B cell (primary cell): ENCODE measurements at regions of chr12 and their contacts with region 1.

Region 1: GRCh38 chr12:810671-811415 is 58.5 kb downstream of the WNK1 start:
- DNase-seq: no peak
- ATAC-seq: no peak
- H3K4me3 ChIP-seq: no peak overlapping the region
- H3K4me3 Mint-ChIP-seq: no peak overlapping the region
- H3K27ac ChIP-seq: peak overlapping the region in 1 of 2 donors; percentile 53
- H3K27ac Mint-ChIP-seq: peak overlapping the region; percentile 23
- H3K4me1 ChIP-seq: peaks cover 10 to 18% of the 10 kb centered on the region in 2 donors
- H3K4me1 Mint-ChIP-seq: peaks cover 42% of the 10 kb centered on the region
- H3K27me3 ChIP-seq: no peaks in the 10 kb centered on the region
- H3K27me3 Mint-ChIP-seq: no peaks in the 10 kb centered on the region
- CTCF ChIP-seq: no peak

Region 2: GRCh38 chr12:575948-576612 is 234.8 kb before region 1 on chr12:
- CTCF ChIA-PET with region 1: interaction called, 151 read pairs
- POLR2A ChIA-PET with region 1: no interaction called
- intact Hi-C with region 1: loop called (anchors 1 kb)
- DNase-seq: peak; percentile 88
- ATAC-seq: peak; percentile 99
- H3K4me3 ChIP-seq: peak overlapping the region in 4 of 5 experiments; percentile 20 to 34 (median 26)
- H3K4me3 Mint-ChIP-seq: peak overlapping the region; percentile 79
- H3K27ac ChIP-seq: no peak overlapping the region
- H3K27ac Mint-ChIP-seq: peak overlapping the region; percentile 65
- H3K4me1 ChIP-seq: peaks cover 8 to 12% of the 10 kb centered on the region in 2 donors
- H3K4me1 Mint-ChIP-seq: peaks cover 8% of the 10 kb centered on the region
- H3K27me3 ChIP-seq: no peaks in the 10 kb centered on the region
- H3K27me3 Mint-ChIP-seq: no peaks in the 10 kb centered on the region
- CTCF ChIP-seq: peak; percentile 97

Region 3: DNA sequence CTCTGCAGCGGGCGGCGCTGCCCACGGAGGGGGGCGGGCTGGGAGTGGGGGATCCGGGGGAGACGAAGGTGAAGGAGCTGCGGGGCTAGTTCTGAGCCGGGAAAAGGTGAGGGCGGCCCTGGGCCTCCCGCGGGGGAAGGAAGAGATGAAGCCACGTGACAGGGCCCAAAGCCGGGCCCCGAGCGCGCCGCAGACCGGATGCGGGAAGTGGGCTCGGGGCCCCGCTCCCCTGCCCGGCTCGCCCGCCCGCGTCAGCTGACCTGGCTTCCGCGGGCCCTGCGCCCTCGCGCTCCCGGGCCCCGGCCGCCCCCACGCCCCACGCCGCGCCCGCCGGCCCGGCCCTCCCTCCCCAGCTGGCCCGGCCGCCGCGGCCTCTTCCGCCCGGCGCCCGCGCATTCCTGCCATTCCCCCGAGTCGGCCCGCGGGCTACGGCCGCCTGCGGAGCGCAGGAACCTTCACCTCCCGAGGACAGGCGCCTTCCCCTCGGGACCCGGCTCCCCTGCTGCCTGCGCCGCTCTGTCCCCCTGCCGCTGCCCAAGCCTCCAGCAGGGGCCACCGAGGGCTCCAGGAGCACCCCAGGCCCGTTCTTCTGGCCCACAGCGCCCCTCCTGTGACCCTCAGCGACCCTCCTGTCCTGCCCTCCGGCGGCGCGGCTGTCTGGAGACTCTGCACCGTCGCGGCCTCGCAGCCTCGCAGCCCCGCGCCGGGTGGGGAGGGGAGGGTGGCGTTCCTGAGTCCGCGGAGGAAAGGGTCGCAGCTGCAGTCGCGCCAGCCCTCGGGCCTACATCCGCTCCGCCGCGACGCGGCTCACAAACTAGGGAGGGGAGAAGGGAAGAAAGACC is 168.0 kb before region 1 on chr12:
- CTCF ChIA-PET with region 1: interaction called, 4 read pairs
- POLR2A ChIA-PET with region 1: no interaction called
- intact Hi-C with region 1: loop called (anchors 5 kb)
- DNase-seq: peak; percentile 86
- ATAC-seq: peak; percentile 75
- H3K4me3 ChIP-seq: peak overlapping the region; percentile 56 to 80 (median 78)
- H3K4me3 Mint-ChIP-seq: peak overlapping the region; percentile 89
- H3K27ac ChIP-seq: peak overlapping the region; percentile 94 to 96
- H3K27ac Mint-ChIP-seq: peak overlapping the region; percentile 99
- H3K4me1 ChIP-seq: peaks cover 28 to 43% of the 10 kb centered on the region in 2 donors
- H3K4me1 Mint-ChIP-seq: peaks cover 51% of the 10 kb centered on the region
- H3K27me3 ChIP-seq: no peaks in the 10 kb centered on the region
- H3K27me3 Mint-ChIP-seq: no peaks in the 10 kb centered on the region
- CTCF ChIP-seq: peak; percentile 43

Region 4: GRCh38 chr12:712172-712863 is 98.5 kb before region 1 on chr12:
- CTCF ChIA-PET with region 1: no interaction called
- POLR2A ChIA-PET with region 1: no interaction called
- intact Hi-C with region 1: no loop called
- DNase-seq: no peak
- ATAC-seq: no peak
- H3K4me3 ChIP-seq: no peak overlapping the region
- H3K4me3 Mint-ChIP-seq: no peak overlapping the region
- H3K27ac ChIP-seq: no peak overlapping the region
- H3K27ac Mint-ChIP-seq: no peak overlapping the region
- H3K4me1 ChIP-seq: no peaks in the 10 kb centered on the region
- H3K4me1 Mint-ChIP-seq: peaks cover 3% of the 10 kb centered on the region
- H3K27me3 ChIP-seq: no peaks in the 10 kb centered on the region
- H3K27me3 Mint-ChIP-seq: no peaks in the 10 kb centered on the region
- CTCF ChIP-seq: no peak

Region 5: GRCh38 chr12:823028-823698 is 12.3 kb after region 1 on chr12:
- CTCF ChIA-PET with region 1: interaction called, 20 read pairs
- POLR2A ChIA-PET with region 1: interaction called, 3 read pairs
- intact Hi-C with region 1: no loop called
- DNase-seq: peak; percentile 78
- ATAC-seq: peak; percentile 94
- H3K4me3 ChIP-seq: no peak overlapping the region
- H3K4me3 Mint-ChIP-seq: peak overlapping the region; percentile 1
- H3K27ac ChIP-seq: peak overlapping the region; percentile 40 to 57
- H3K27ac Mint-ChIP-seq: peak overlapping the region; percentile 32
- H3K4me1 ChIP-seq: peaks cover 16 to 23% of the 10 kb centered on the region in 2 donors
- H3K4me1 Mint-ChIP-seq: peaks cover 35% of the 10 kb centered on the region
- H3K27me3 ChIP-seq: no peaks in the 10 kb centered on the region
- H3K27me3 Mint-ChIP-seq: no peaks in the 10 kb centered on the region
- CTCF ChIP-seq: no peak

Region 6: GRCh38 chr12:868722-869121 is 57.9 kb after region 1 on chr12:
- CTCF ChIA-PET with region 1: interaction called, 19 read pairs
- POLR2A ChIA-PET with region 1: no interaction called
- intact Hi-C with region 1: loop called (anchors 10 kb)
- DNase-seq: no peak
- ATAC-seq: no peak
- H3K4me3 ChIP-seq: no peak overlapping the region
- H3K4me3 Mint-ChIP-seq: no peak overlapping the region
- H3K27ac ChIP-seq: no peak overlapping the region
- H3K27ac Mint-ChIP-seq: no peak overlapping the region
- H3K4me1 ChIP-seq: no peaks in the 10 kb centered on the region
- H3K4me1 Mint-ChIP-seq: no peaks in the 10 kb centered on the region
- H3K27me3 ChIP-seq: no peaks in the 10 kb centered on the region
- H3K27me3 Mint-ChIP-seq: no peaks in the 10 kb centered on the region
- CTCF ChIP-seq: no peak

Region 7: DNA sequence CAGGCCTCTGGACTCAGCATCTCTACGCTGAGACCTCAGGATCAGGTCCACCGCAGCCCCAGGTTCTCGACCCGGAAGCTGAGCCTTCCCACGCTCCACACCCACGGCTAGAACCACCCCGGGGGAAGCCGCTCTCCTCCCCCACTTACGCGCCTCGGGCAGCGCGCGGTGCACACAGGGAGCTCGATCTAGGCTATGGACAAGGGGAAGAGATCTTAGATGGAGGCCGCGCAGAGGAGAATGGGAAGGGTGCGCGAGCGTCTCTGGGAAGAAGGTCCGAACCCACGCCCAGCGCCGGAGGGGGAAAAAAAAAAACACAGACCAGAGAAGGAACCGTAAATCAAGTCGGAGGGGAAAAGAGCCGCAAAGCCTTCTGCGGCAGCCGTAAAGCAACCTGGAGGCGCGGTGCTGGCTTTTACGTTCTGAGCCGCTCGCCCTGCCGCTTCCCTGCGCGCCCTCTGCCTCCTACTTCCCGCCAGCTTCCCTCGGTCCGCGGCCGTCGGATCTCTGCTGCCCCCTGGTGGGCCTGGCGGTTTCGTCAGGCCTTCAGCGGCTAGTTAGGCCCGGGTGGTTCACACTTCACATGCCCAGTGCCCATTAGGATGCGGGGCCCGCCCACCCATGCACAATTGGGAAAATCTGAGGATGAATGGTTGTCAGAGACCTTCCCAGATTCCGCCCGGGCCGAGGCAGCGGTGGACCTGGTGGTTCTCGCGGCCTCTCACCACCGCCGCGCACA is 138.8 kb after region 1 on chr12 and contains the start of gene RAD52:
- CTCF ChIA-PET with region 1: interaction called, 13 read pairs
- POLR2A ChIA-PET with region 1: no interaction called
- intact Hi-C with region 1: no loop called
- DNase-seq: peak; percentile 99
- ATAC-seq: peak; percentile 86
- H3K4me3 ChIP-seq: peak within 1 kb of the TSS; percentile 67 to 91 (median 74)
- H3K4me3 Mint-ChIP-seq: peak within 1 kb of the TSS; percentile 88
- H3K27ac ChIP-seq: peak within 1 kb of the TSS; percentile 82 to 84
- H3K27ac Mint-ChIP-seq: peak within 1 kb of the TSS; percentile 90
- H3K4me1 ChIP-seq: peaks cover 0 to 13% of the 10 kb centered on the region in 2 donors
- H3K4me1 Mint-ChIP-seq: peaks cover 27% of the 10 kb centered on the region
- H3K27me3 ChIP-seq: no peaks in the 10 kb centered on the region
- H3K27me3 Mint-ChIP-seq: no peaks in the 10 kb centered on the region
- CTCF ChIP-seq: peak; percentile 99
- total RNA-seq, gene RAD52: 22.9 and 27.6 TPM in 2 replicates

Region 8: DNA sequence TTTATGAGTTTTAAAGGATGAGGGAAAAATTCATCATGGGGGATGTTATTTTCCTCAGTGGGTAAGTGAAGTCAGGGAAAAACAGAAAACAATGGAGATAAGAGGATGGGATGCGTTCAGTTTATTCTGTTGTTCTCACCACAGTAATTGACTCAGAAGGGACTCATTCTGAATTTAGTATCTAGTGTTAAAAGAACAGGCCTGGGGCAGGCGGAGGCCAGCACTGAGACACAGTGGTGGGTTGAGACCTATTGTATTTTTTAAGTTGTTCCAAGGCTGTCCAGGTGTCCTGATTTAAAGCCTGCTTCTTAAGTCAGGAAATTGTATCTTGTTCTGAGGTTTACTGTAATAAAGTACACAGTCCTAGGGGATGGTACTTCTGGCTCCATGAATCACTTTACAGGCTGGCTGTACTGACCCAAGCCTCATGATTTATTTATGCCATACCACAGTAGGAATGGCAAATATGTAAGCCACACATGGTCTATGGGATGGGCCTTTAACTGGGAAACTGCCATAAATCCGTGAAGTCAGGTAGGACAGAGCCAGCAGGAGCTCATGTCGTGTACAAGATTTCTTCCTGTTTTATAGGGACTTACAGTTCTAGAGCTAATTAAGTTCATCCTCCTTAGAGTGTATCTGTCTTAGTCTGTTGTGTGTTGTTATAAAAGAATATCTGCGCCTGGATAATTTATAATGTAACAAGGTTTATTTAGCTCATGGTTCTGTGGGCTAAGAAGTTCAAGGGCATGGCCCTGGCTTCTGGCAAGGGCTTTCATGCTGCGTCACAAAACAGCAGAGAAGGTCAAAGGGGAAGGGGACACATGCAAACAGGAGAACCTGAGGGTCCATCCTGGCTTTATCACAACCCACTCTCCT is 539.5 kb after region 1 on chr12:
- CTCF ChIA-PET with region 1: no interaction called
- POLR2A ChIA-PET with region 1: no interaction called
- intact Hi-C with region 1: no loop called
- DNase-seq: no peak
- ATAC-seq: no peak
- H3K4me3 ChIP-seq: no peak overlapping the region
- H3K4me3 Mint-ChIP-seq: no peak overlapping the region
- H3K27ac ChIP-seq: no peak overlapping the region
- H3K27ac Mint-ChIP-seq: no peak overlapping the region
- H3K4me1 ChIP-seq: no peaks in the 10 kb centered on the region
- H3K4me1 Mint-ChIP-seq: peaks cover 3% of the 10 kb centered on the region
- H3K27me3 ChIP-seq: no peaks in the 10 kb centered on the region
- H3K27me3 Mint-ChIP-seq: no peaks in the 10 kb centered on the region
- CTCF ChIP-seq: no peak